ENCODE measurements at regions of chr6 and their contacts with region 1.

Region 1: GRCh38 chr6:130946076-130946475 is 117.0 kb downstream of the EPB41L2 start:
- DNase-seq: no peak
- ATAC-seq: no peak
- H3K4me3 Mint-ChIP-seq: no peak overlapping the region
- H3K27ac Mint-ChIP-seq: no peak overlapping the region
- H3K4me1 Mint-ChIP-seq: peaks cover 19% of the 10 kb centered on the region
- H3K27me3 Mint-ChIP-seq: no peaks in the 10 kb centered on the region
- CTCF ChIP-seq: no peak

Region 2: GRCh38 chr6:130969791-130970491 is 23.9 kb after region 1 on chr6:
- CTCF ChIA-PET with region 1: no interaction called
- POLR2A ChIA-PET with region 1: no interaction called
- intact Hi-C with region 1: loop called (anchors 2 kb)
- DNase-seq: no peak
- ATAC-seq: no peak
- H3K4me3 Mint-ChIP-seq: no peak overlapping the region
- H3K27ac Mint-ChIP-seq: no peak overlapping the region
- H3K4me1 Mint-ChIP-seq: peaks cover 17% of the 10 kb centered on the region
- H3K27me3 Mint-ChIP-seq: no peaks in the 10 kb centered on the region
- CTCF ChIP-seq: no peak